PC-3 (cell line): ENCODE measurements at regions of chr16 and their contacts with region 1.

Region 1: GRCh38 chr16:2874912-2875362 is 8.1 kb upstream of the FLYWCH2 start:
- DNase-seq: peak; percentile 71
- ATAC-seq: peak; percentile 99
- H3K4me3 ChIP-seq: no peak overlapping the region
- H3K27ac ChIP-seq: no peak overlapping the region
- H3K4me1 ChIP-seq: no peaks in the 10 kb centered on the region
- H3K27me3 ChIP-seq: no peaks in the 10 kb centered on the region
- CTCF ChIP-seq: peak; percentile 78

Region 2: GRCh38 chr16:2838928-2839327 is 36.0 kb before region 1 on chr16:
- CTCF ChIA-PET with region 1: interaction called, 20 read pairs
- POLR2A ChIA-PET with region 1: no interaction called
- intact Hi-C with region 1: no loop called
- DNase-seq: peak; percentile 74
- ATAC-seq: peak; percentile 77
- H3K4me3 ChIP-seq: no peak overlapping the region
- H3K27ac ChIP-seq: peak overlapping the region; percentile 10; the same call in 1 of the 2 replicates
- H3K4me1 ChIP-seq: peaks cover 22% of the 10 kb centered on the region
- H3K27me3 ChIP-seq: no peaks in the 10 kb centered on the region
- CTCF ChIP-seq: peak; percentile 88

Region 3: DNA sequence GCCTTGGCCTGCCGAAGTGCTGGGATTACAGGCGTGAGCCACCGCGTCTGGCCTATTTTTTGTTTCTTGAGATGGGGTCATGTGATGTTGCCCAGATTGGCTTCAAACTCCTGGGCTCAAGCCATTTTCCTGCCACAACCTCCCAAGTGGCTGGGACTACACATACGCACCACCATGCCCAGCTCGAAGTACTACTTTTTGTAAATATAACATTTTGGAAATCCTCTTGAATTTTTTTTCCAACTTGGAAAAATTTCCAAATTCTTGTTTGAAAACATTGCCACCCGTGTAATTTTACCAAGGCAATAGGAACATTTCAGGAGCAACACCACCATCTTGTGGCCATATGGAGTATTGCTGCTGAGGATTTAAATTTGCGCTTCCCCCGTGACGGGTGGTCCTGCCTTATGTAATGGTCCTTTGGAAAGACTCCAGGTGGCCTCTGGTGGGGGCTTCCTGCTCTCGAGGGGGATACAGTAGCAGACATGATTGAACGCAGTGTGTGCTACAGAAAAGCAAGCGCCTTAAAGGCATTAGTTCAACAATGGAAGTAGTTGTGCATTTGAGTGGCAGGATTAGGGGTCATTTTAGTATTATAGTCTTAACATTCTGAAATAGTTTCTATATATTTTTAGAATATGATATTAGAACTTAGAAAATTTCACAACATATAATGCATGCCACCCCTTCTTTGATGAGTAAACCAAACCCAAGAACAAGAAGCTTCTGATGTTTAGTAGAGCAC is 44.7 kb after region 1 on chr16:
- CTCF ChIA-PET with region 1: interaction called, 5 read pairs
- POLR2A ChIA-PET with region 1: no interaction called
- intact Hi-C with region 1: loop called (anchors 2 kb)
- DNase-seq: peak; percentile 74
- ATAC-seq: no peak
- H3K4me3 ChIP-seq: no peak overlapping the region
- H3K27ac ChIP-seq: no peak overlapping the region
- H3K4me1 ChIP-seq: peaks cover 11% of the 10 kb centered on the region
- H3K27me3 ChIP-seq: no peaks in the 10 kb centered on the region
- CTCF ChIP-seq: peak; percentile 85

Region 4: GRCh38 chr16:2926650-2927646 is 52.0 kb after region 1 on chr16:
- CTCF ChIA-PET with region 1: interaction called, 5 read pairs
- POLR2A ChIA-PET with region 1: no interaction called
- intact Hi-C with region 1: loop called (anchors 2 kb)
- DNase-seq: peak; percentile 90
- ATAC-seq: peak; percentile 90
- H3K4me3 ChIP-seq: peak overlapping the region; percentile 16; the same call in 1 of the 2 replicates
- H3K27ac ChIP-seq: no peak overlapping the region
- H3K4me1 ChIP-seq: peaks cover 5% of the 10 kb centered on the region; the same call in 1 of the 2 replicates
- H3K27me3 ChIP-seq: no peaks in the 10 kb centered on the region
- CTCF ChIP-seq: peak; percentile 93

Region 5: DNA sequence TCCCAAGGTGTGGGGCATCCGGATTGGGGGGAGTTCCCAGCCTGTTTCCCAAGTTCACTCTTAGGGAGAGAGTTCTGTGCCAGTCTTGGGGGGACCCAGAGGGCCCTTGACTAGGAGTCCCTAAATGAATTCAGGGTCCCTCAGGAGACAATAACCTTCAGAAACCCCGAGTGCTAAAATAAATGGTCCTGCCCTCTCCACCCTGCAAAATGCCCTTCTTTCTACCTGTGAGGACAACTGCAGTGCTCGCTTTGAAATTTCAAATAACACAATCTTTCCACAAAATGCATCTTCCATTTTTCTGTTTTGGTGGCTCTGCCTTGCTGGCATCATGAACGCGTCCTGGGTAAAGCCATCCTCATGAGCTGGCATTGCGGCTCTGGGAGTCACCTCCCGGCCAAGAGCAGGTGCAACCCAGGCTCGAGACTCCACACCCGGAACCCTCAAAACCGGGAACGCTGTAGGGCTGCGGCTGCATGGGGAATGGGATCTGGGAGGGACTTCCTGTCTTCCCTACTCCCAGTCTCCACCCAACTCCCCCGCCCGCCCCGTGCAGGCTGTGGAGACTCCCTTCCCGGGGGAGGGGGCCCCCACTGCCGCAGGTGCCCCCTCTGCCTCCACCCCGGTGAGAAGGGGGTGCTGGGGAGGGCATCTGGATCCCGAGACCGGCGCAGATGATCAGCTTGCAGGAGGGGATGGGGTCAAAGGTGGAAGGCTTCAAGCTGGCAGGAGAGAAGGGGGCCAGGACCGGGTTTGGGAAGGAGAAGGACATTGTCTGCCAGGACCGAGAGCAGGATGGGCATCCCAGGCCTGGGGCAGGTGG is 237.3 kb after region 1 on chr16 and contains the start of gene ZNF205:
- CTCF ChIA-PET with region 1: no interaction called
- POLR2A ChIA-PET with region 1: no interaction called
- intact Hi-C with region 1: no loop called
- DNase-seq: peak; percentile 79
- ATAC-seq: peak; percentile 93
- H3K4me3 ChIP-seq: peak within 1 kb of the TSS; percentile 91
- H3K27ac ChIP-seq: no peak within 1 kb of the TSS
- H3K4me1 ChIP-seq: peaks cover 16% of the 10 kb centered on the region
- H3K27me3 ChIP-seq: no peaks in the 10 kb centered on the region
- CTCF ChIP-seq: no peak
- total RNA-seq, gene ZNF205: 19.0 and 27.0 TPM in 2 replicates